Caco-2 (cell line): ENCODE measurements at regions of chr11 and their contacts with region 1.

Region 1: GRCh38 chr11:11798586-11799438 is 43.0 kb upstream of the USP47 start:
- DNase-seq: peak; percentile 83 to 89
- H3K4me3 ChIP-seq: no peak overlapping the region
- H3K4me3 Mint-ChIP-seq: no peak overlapping the region
- H3K27ac Mint-ChIP-seq: no peak overlapping the region
- H3K4me1 ChIP-seq: no peaks in the 10 kb centered on the region; the same call in 1 of the 2 replicates
- H3K4me1 Mint-ChIP-seq: no peaks in the 10 kb centered on the region
- H3K27me3 ChIP-seq: peaks cover 1% of the 10 kb centered on the region
- H3K27me3 Mint-ChIP-seq: peaks cover 6% of the 10 kb centered on the region
- CTCF ChIP-seq: peak; percentile 96

Region 2: DNA sequence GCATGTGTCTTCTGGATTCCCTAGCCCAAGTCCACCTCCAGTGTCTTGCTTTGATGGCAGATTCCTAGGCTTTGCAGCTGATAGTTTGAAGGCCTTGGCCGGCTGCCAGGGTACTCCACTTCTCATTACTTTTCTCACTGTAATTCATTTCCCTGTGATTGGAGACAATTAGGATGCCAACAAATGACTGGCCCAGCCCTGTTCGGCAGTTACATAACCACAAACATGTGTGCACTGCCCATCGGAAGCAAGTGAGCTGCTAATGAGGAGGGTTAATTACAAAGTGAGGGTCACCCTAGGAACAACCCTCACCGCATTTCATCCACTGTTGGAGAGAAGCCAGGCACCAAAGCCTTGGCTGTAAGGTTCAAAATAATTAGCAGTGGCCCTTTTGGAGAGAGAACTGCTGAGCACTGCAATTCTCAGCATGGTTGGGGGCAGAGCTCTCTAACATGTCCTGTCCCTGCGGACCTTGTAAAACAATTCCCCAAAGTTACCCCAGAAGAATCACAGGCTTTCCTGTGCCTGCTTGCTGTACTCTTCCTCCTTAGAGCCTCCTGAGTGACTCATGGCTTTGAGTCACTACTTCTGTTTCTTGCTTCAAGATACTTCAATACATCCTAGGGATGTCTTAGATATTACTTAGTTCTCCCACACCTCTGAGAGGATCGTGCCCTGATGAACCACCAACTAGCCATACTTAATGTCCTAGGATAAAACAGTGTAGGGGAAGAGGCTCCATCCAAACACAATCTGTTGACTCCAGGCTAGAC is 67.3 kb before region 1 on chr11:
- CTCF ChIA-PET with region 1: no interaction called
- POLR2A ChIA-PET with region 1: no interaction called
- intact Hi-C with region 1: no loop called
- DNase-seq: no peak
- H3K4me3 ChIP-seq: no peak overlapping the region
- H3K4me3 Mint-ChIP-seq: no peak overlapping the region
- H3K27ac Mint-ChIP-seq: no peak overlapping the region
- H3K4me1 ChIP-seq: no peaks in the 10 kb centered on the region
- H3K4me1 Mint-ChIP-seq: no peaks in the 10 kb centered on the region
- H3K27me3 ChIP-seq: no peaks in the 10 kb centered on the region; the same call in 1 of the 2 replicates
- H3K27me3 Mint-ChIP-seq: peaks cover 31% of the 10 kb centered on the region
- CTCF ChIP-seq: no peak

Region 3: DNA sequence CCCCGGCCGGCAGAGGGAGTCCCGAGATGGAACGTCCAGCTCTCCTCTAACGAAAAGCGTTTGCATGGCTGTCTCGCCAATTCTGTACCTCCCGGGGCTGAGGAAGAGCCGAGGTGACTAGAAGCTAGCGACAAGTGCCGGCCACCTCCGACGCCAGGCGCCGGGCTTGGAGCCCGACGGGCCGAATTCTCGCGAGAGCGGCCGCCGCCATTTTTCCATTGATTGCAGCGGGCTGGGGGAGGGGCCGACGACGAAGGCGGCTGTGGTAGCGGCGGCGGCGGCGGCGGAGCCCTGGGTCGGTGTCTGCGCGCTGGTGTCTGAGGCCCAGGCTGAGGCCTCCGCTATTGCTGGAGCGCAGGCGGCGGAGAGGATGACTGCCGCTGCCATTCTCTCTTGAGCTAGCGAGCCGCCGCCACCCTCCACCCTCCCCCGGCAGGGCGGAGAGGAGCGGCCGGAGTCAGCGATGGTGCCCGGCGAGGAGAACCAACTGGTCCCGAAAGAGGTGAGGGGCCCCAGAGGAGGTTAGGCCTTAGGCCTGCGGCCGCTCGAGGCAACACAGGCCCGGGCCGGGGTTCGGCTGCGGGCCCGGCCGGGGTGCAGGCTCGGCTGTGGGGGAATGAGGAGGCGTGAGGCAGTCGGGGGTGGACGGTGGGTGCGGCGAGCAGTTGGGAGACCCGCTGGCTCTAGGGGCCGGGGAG is 43.1 kb after region 1 on chr11 and contains the start of gene USP47:
- CTCF ChIA-PET with region 1: interaction called, 7 read pairs
- POLR2A ChIA-PET with region 1: no interaction called
- intact Hi-C with region 1: loop called (anchors 1 kb)
- DNase-seq: peak; percentile 95 to 96
- H3K4me3 ChIP-seq: peak within 1 kb of the TSS; percentile 84
- H3K4me3 Mint-ChIP-seq: no peak within 1 kb of the TSS
- H3K27ac Mint-ChIP-seq: no peak within 1 kb of the TSS
- H3K4me1 ChIP-seq: peaks cover 30% of the 10 kb centered on the region
- H3K4me1 Mint-ChIP-seq: no peaks in the 10 kb centered on the region
- H3K27me3 ChIP-seq: no peaks in the 10 kb centered on the region
- H3K27me3 Mint-ChIP-seq: no peaks in the 10 kb centered on the region
- CTCF ChIP-seq: peak in 1 of 2 experiments; percentile 77
- total RNA-seq, gene USP47: 50.4 and 52.8 TPM in 2 replicates

Region 4: GRCh38 chr11:11848891-11849746 is 50.3 kb after region 1 on chr11:
- CTCF ChIA-PET with region 1: interaction called, 7 read pairs
- POLR2A ChIA-PET with region 1: no interaction called
- intact Hi-C with region 1: loop called (anchors 1 kb)
- DNase-seq: peak; percentile 70 to 81
- H3K4me3 ChIP-seq: no peak overlapping the region
- H3K4me3 Mint-ChIP-seq: no peak overlapping the region
- H3K27ac Mint-ChIP-seq: no peak overlapping the region
- H3K4me1 ChIP-seq: peaks cover 37% of the 10 kb centered on the region
- H3K4me1 Mint-ChIP-seq: peaks cover 36% of the 10 kb centered on the region
- H3K27me3 ChIP-seq: no peaks in the 10 kb centered on the region
- H3K27me3 Mint-ChIP-seq: no peaks in the 10 kb centered on the region
- CTCF ChIP-seq: peak; percentile 78 to 93

Region 5: GRCh38 chr11:11876458-11876857 is 77.6 kb after region 1 on chr11:
- CTCF ChIA-PET with region 1: interaction called, 3 read pairs
- POLR2A ChIA-PET with region 1: no interaction called
- intact Hi-C with region 1: loop called (anchors 1 kb)
- DNase-seq: peak; percentile 43 to 51
- H3K4me3 ChIP-seq: no peak overlapping the region
- H3K4me3 Mint-ChIP-seq: no peak overlapping the region
- H3K27ac Mint-ChIP-seq: no peak overlapping the region
- H3K4me1 ChIP-seq: peaks cover 16% of the 10 kb centered on the region
- H3K4me1 Mint-ChIP-seq: peaks cover 21% of the 10 kb centered on the region
- H3K27me3 ChIP-seq: no peaks in the 10 kb centered on the region
- H3K27me3 Mint-ChIP-seq: no peaks in the 10 kb centered on the region
- CTCF ChIP-seq: peak; percentile 27 to 30

Region 6: DNA sequence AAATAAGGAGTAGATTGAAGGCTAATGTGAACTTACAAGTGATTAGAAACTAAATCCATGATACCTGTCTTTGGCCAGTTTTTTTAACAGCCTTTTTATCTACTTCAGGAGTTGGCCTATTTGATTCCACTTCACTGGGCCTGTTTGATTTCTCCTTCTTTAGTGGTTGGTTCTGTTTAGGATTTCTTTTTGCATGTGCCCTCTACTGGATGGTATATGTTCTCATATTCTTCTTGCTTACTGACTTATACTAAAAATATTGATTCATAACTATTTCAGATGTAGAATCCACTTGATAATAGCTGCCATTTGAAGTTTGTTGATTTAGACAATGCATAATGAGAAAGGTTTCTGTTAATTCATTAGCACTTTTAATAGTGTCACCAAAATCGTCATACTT is 96.9 kb after region 1 on chr11:
- CTCF ChIA-PET with region 1: interaction called, 5 read pairs
- POLR2A ChIA-PET with region 1: no interaction called
- intact Hi-C with region 1: loop called (anchors 1 kb)
- DNase-seq: no peak
- H3K4me3 ChIP-seq: no peak overlapping the region
- H3K4me3 Mint-ChIP-seq: no peak overlapping the region
- H3K27ac Mint-ChIP-seq: no peak overlapping the region
- H3K4me1 ChIP-seq: no peaks in the 10 kb centered on the region
- H3K4me1 Mint-ChIP-seq: no peaks in the 10 kb centered on the region
- H3K27me3 ChIP-seq: no peaks in the 10 kb centered on the region
- H3K27me3 Mint-ChIP-seq: no peaks in the 10 kb centered on the region
- CTCF ChIP-seq: peak in 1 of 2 experiments; percentile 23